Left cardiac atrium (tissue), 4 donors: ENCODE measurements at regions of chr4 and their contacts with region 1.

Region 1: DNA sequence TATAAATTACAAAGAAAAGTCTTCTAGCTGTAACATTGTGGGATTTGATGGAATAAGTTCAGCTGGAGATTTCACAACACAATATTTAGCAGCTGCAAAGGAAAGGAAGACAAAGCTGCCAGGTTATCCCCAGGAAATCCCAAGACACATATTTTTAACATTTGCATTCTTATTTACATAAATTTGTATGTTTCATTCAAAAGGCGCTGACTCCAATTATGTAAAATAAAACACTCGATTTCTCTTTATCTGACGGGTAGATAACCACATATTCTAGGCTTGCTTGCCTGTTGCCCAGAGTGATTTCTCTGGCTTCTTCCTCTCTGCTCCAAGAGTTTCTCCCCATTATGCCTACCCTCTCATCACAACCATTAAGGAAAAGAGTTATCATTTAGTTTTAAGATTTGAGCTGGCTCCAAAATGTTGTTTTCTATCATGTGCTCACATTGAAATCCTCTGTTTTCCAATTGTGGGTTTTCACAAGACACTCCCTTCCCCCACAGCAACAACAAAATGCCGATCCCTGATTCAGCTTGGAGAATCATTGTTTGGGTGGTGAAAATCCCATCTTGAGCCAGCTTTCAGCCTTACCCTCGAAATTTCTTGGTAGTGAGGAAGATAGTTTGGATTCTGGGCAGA is 128.2 kb upstream of the RASGEF1B start:
- DNase-seq: no peak
- ATAC-seq: no peak

Region 2: GRCh38 chr4:81482326-81482725 is 117.5 kb before region 1 on chr4:
- intact Hi-C with region 1: loop called in 1 of 2 experiments (anchors 10 kb)
- DNase-seq: no peak
- ATAC-seq: no peak

Region 3: GRCh38 chr4:83589279-83589678 is 1989.4 kb after region 1 on chr4:
- intact Hi-C with region 1: no loop called
- DNase-seq: no peak
- ATAC-seq: no peak